Activated B cell treated with CpG ODN at 0.5 μM for 24 hours (primary cell): ENCODE measurements at regions of chr21 and their contacts with region 1.

Region 1: GRCh38 chr21:16028941-16029464 is 299.2 kb downstream of the USP25 start:
- DNase-seq: no peak
- ATAC-seq: no peak
- H3K4me3 Mint-ChIP-seq: no peak overlapping the region
- H3K27ac Mint-ChIP-seq: no peak overlapping the region
- H3K4me1 Mint-ChIP-seq: no peaks in the 10 kb centered on the region
- H3K27me3 Mint-ChIP-seq: no peaks in the 10 kb centered on the region
- CTCF ChIP-seq: no peak

Region 2: DNA sequence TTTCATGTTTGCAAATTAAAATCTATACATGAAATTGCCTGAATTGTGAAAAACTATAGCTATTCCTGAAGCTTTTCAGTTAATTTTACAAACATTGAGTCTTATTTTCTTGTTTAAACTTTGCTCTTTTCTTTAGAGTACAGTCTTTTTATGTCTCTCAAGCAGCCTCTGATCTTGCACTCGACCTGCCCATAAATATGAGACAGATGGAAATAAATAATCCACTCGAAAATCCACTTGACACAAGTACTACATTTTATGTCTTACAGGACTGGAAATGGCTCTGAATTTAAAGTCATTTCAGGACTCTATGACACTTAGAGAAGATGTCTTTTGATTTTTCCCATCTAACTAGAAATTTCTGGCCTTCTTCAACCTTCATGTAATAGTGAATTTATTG is 15.4 kb before region 1 on chr21:
- CTCF ChIA-PET with region 1: no interaction called
- POLR2A ChIA-PET with region 1: no interaction called
- intact Hi-C with region 1: loop called (anchors 1 kb)
- DNase-seq: no peak
- ATAC-seq: no peak
- H3K4me3 Mint-ChIP-seq: no peak overlapping the region
- H3K27ac Mint-ChIP-seq: no peak overlapping the region
- H3K4me1 Mint-ChIP-seq: no peaks in the 10 kb centered on the region
- H3K27me3 Mint-ChIP-seq: no peaks in the 10 kb centered on the region
- CTCF ChIP-seq: no peak

Region 3: DNA sequence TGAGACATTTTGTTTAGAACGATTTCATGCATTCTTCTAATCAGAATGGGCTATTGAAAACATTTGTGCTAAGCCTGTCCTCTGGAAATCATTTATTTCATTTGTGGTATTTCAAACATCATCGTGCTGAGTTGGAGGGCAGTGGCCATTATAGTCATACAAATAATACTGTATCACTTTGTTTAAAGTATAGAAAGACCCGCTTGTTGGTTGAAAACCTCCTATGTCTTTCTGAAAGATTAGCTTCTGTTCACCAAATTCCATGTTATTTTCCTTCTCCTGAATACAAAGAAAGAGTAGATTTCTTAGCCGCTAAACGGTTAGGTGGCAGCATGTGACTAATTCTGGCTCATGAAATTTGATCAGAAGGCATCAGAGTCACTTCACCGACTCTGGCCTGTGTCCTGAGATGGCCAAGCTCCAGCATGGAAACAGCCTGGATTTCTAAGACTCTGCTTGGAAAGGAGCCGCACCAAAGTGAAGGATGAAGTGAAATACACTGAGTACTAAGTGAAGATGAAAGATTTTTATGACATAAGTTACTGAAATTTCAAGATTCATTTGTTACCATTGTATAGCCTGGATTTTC is 55.9 kb after region 1 on chr21:
- CTCF ChIA-PET with region 1: no interaction called
- POLR2A ChIA-PET with region 1: no interaction called
- intact Hi-C with region 1: no loop called
- DNase-seq: no peak
- ATAC-seq: no peak
- H3K4me3 Mint-ChIP-seq: no peak overlapping the region
- H3K27ac Mint-ChIP-seq: no peak overlapping the region
- H3K4me1 Mint-ChIP-seq: no peaks in the 10 kb centered on the region
- H3K27me3 Mint-ChIP-seq: no peaks in the 10 kb centered on the region
- CTCF ChIP-seq: no peak

Region 4: DNA sequence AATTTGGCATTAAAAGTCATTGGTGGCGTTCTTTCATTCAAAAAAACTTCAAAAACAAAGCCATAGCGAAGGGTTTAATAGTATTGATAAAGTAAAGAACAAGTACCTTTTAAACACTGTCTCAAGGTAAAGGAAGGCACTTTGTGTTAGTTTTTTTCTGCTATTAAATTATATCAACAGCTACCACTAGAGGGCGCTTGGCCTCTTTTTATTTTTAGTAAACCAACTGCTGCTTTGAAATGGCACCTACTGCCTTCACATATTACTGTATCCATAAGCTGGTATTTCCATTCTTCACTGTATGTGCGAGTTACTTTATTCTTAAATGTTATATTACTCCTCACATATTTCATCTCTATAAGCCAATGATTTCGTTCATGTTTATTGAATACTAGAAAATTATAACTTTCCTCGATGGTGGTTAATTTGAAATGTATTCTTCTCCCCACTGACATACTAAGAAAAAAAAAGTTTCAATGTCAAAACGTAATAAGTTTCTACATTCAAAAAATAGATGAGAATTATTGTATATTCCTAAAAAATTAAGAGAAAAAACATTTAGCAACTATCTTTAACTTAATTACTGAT is 1358.1 kb after region 1 on chr21:
- CTCF ChIA-PET with region 1: no interaction called
- POLR2A ChIA-PET with region 1: no interaction called
- intact Hi-C with region 1: no loop called
- DNase-seq: no peak
- ATAC-seq: peak; percentile 25
- H3K4me3 Mint-ChIP-seq: no peak overlapping the region
- H3K27ac Mint-ChIP-seq: no peak overlapping the region
- H3K4me1 Mint-ChIP-seq: no peaks in the 10 kb centered on the region
- H3K27me3 Mint-ChIP-seq: no peaks in the 10 kb centered on the region
- CTCF ChIP-seq: peak; percentile 42